A549 (cell line): ENCODE measurements at regions of chr15 and their contacts with region 1.

Region 1: DNA sequence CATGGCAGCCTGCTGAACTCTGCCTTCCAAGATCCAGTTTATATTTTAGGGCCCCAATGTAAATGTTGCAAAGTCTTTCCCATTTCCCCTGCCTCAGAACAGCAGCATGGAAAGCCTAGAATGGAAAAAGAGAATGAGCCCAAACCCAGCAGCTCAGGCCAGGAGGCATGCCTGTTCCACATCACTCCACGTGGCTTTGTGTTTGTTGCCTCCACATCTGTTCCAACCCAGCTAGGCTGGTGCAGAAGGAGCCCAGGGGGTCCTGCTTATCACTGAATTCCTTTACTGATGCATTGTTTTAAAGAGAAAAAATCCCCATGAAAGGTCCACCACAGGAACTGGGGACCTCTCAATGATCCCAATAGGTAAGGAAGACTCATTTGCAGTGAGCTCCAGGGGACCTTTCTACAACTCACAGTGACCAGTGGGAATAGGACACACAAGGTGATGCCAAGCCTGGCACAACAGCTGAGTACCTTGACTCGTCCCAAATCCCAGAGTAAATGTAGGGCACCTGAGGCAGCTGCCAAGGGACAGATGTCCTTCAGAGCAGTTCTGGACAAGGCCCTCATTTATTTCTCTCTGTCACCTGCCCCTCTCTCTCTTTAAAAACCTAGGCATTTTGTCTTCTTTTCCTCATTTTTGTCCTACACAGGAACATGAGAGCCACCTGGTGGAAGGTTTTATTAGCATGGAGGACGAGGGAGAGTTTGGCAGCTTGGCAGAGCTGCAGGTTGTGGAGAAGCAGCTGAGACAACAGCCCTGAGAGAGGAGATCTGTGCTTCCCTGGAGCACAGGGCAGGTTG is 41.7 kb upstream of the ADAMTS17 start:
- DNase-seq: peak; percentile 39 to 64
- ATAC-seq: peak; percentile 86 to 93
- H3K4me3 ChIP-seq: no peak overlapping the region
- H3K27ac ChIP-seq: no peak overlapping the region
- H3K4me1 ChIP-seq: no peaks in the 10 kb centered on the region
- CTCF ChIP-seq: peak; percentile 74
- EP300 ChIP-seq: no peak
- POLR2A ChIP-seq: no peak
- RAD21 ChIP-seq: peak; percentile 80 to 87

Region 2: GRCh38 chr15:99928429-99928981 is 455.0 kb before region 1 on chr15:
- CTCF ChIA-PET with region 1: interaction called, 18 read pairs
- POLR2A ChIA-PET with region 1: no interaction called
- DNase-seq: peak; percentile 69 to 79
- ATAC-seq: peak; percentile 91 to 96
- H3K4me3 ChIP-seq: peak overlapping the region; percentile 45
- H3K27ac ChIP-seq: peak overlapping the region; percentile 47 to 82; a peak in 5 of 6 replicates
- H3K4me1 ChIP-seq: peaks cover 6% of the 10 kb centered on the region; the same call in 2 of the 3 replicates
- CTCF ChIP-seq: peak; percentile 64
- EP300 ChIP-seq: no peak
- POLR2A ChIP-seq: no peak; the same call in 1 of the 2 replicates
- RAD21 ChIP-seq: peak; percentile 59 to 74

Region 3: GRCh38 chr15:100341662-100342560 is 41.6 kb before region 1 on chr15 and contains the start of gene ADAMTS17:
- CTCF ChIA-PET with region 1: interaction called, 291 read pairs
- POLR2A ChIA-PET with region 1: no interaction called
- DNase-seq: peak; percentile 94
- ATAC-seq: peak; percentile 91 to 99
- H3K4me3 ChIP-seq: peak within 1 kb of the TSS; percentile 54
- H3K27ac ChIP-seq: peak within 1 kb of the TSS; percentile 3 to 35; a peak in 4 of 6 replicates
- H3K4me1 ChIP-seq: peaks cover 4% of the 10 kb centered on the region; the same call in 1 of the 3 replicates
- CTCF ChIP-seq: peak; percentile 87
- EP300 ChIP-seq: no peak
- POLR2A ChIP-seq: no peak
- RAD21 ChIP-seq: peak; percentile 68 to 83
- polyA plus RNA-seq, gene ADAMTS17: 0.05 and 0.11 TPM in 2 replicates

Region 4: DNA sequence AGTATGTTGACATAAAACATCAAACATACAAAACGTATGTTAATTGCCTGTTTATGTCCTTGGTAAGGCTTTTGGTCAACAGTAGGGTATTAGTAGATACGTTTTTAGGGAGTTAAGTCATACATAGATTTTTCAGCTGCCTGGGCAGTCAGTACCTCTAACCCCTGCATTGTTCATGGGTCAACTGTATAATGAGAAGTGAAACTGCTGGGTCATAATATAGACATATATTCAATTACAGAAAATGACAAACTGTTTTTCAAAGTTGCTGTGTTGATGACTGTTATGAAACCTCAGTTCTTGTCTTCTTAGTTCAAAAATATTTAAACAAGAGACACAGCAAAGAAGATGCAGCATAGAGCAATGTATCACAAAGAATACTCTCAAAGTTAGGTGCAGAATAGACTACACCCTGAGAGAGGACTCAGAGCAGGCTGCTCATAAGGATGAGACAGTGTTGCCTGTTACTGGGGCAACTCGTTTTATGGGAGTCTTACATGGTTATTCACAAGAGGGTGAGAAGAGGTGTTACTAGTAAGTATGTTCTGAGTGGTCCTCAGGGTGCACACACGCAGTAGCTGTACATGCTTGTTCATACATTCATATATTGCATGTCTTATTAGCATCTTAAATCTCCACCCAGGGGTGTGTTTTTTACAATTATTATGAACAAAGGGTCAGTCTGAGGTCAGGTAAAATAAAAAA is 11.4 kb after region 1 on chr15:
- CTCF ChIA-PET with region 1: interaction called, 14 read pairs
- POLR2A ChIA-PET with region 1: no interaction called
- DNase-seq: no peak
- ATAC-seq: no peak
- H3K4me3 ChIP-seq: no peak overlapping the region
- H3K27ac ChIP-seq: no peak overlapping the region
- H3K4me1 ChIP-seq: no peaks in the 10 kb centered on the region
- CTCF ChIP-seq: no peak
- EP300 ChIP-seq: no peak
- POLR2A ChIP-seq: no peak
- RAD21 ChIP-seq: no peak